K562 (cell line): ENCODE measurements at regions of chr7 and their contacts with region 1.

Region 1: GRCh38 chr7:107879400-107880035 is 11.5 kb upstream of the DLD start:
- DNase-seq: peak; percentile 57 to 78 (median 66)
- ATAC-seq: peak; percentile 88
- H3K4me3 ChIP-seq: no peak overlapping the region
- H3K27ac ChIP-seq: no peak overlapping the region
- H3K4me1 ChIP-seq: peaks cover 0 to 2% of the 10 kb centered on the region in 2 experiments; a peak in 1 of 5 replicates
- H3K27me3 ChIP-seq: peaks cover 2 to 13% of the 10 kb centered on the region in 2 experiments; a peak in 3 of 5 replicates
- CTCF ChIP-seq: peak; percentile 77 to 95 (median 89)
- EP300 ChIP-seq: peak; percentile 41; the same call in 1 of the 2 replicates
- POLR2A ChIP-seq: no peak
- RAD21 ChIP-seq: peak; percentile 94 to 95

Region 2: GRCh38 chr7:107201795-107202450 is 677.6 kb before region 1 on chr7:
- CTCF ChIA-PET with region 1: interaction called, 6 read pairs
- POLR2A ChIA-PET with region 1: no interaction called
- in situ Hi-C with region 1: no loop called
- intact Hi-C with region 1: loop called (anchors 5 kb)
- DNase-seq: peak; percentile 59 to 68 (median 64)
- ATAC-seq: peak; percentile 90
- H3K4me3 ChIP-seq: no peak overlapping the region
- H3K27ac ChIP-seq: no peak overlapping the region
- H3K4me1 ChIP-seq: peaks cover 0 to 5% of the 10 kb centered on the region in 2 experiments; a peak in 1 of 5 replicates
- H3K27me3 ChIP-seq: no peaks in the 10 kb centered on the region
- CTCF ChIP-seq: peak; percentile 77 to 84 (median 80)
- EP300 ChIP-seq: no peak
- POLR2A ChIP-seq: no peak
- RAD21 ChIP-seq: peak; percentile 73 to 80

Region 3: DNA sequence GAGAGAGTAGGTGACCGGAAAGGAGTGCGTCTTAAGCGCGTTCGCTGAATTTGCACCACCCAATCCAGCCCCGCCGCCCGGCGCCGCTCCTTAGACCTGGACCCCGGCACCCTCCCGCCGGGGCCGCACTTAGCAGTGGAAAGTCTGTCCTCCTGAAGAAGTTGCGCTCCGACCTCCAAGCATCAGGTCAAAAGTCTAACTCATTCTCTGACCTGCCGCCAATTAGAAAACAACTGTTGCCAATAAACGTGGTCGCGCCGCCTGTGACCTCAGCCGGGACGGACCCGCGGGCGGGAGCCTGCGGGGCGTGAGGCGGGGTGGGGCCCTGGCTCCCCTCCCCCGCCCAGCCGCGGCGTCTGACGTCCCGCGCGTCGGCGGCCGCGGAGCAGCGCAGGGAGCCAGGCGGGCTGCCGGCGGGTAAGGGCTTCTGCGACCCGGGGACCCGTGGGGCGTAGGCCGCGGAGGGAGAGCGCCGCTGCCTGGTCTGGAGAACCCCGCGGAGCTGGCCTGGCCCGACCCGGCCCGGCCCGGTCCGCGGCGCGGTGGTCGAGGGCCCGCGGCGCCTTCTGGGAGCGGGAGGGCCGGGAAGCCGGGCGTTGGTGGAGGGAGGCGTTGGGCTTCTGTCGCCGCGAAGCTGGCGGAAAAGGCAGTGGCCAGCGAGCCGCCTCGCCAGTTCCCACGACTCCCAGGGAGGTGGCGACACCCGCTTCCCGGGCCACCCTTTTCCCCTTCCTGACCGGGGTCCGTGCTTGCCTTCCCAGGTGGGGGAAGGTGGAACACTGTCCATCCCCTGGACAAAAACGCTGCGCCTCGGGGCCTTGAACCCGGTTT is 299.4 kb before region 1 on chr7 and contains the start of gene BCAP29:
- CTCF ChIA-PET with region 1: no interaction called
- POLR2A ChIA-PET with region 1: no interaction called
- in situ Hi-C with region 1: no loop called
- intact Hi-C with region 1: loop called (anchors 1 kb)
- DNase-seq: peak; percentile 94 to 95 (median 95)
- ATAC-seq: peak; percentile 94
- H3K4me3 ChIP-seq: peak within 1 kb of the TSS; percentile 62
- H3K27ac ChIP-seq: peak within 1 kb of the TSS; percentile 83
- H3K4me1 ChIP-seq: peaks cover 6 to 13% of the 10 kb centered on the region in 2 experiments; a peak in 4 of 5 replicates
- H3K27me3 ChIP-seq: no peaks in the 10 kb centered on the region
- CTCF ChIP-seq: peak; percentile 55 to 64 (median 60)
- EP300 ChIP-seq: peak; percentile 43
- POLR2A ChIP-seq: peak; percentile 92
- RAD21 ChIP-seq: peak; percentile 63 to 65
- polyA plus RNA-seq, gene BCAP29: 63.4 to 64.4 TPM

Region 4: GRCh38 chr7:107743567-107744344 is 135.8 kb before region 1 on chr7 and contains the start of gene CBLL1:
- CTCF ChIA-PET with region 1: interaction called, 14 read pairs
- POLR2A ChIA-PET with region 1: interaction called, 9 read pairs
- in situ Hi-C with region 1: loop called (anchors 10 kb)
- intact Hi-C with region 1: loop called (anchors 1 kb)
- DNase-seq: peak; percentile 95 to 99 (median 96)
- ATAC-seq: peak; percentile 97
- H3K4me3 ChIP-seq: peak within 1 kb of the TSS; percentile 93
- H3K27ac ChIP-seq: peak within 1 kb of the TSS; percentile 100
- H3K4me1 ChIP-seq: peaks cover 3 to 21% of the 10 kb centered on the region in 2 experiments
- H3K27me3 ChIP-seq: no peaks in the 10 kb centered on the region
- CTCF ChIP-seq: peak; percentile 96 to 98 (median 97)
- EP300 ChIP-seq: peak; percentile 78; the same call in 1 of the 2 replicates
- POLR2A ChIP-seq: peak; percentile 99
- RAD21 ChIP-seq: peak; percentile 81 to 96
- polyA plus RNA-seq, gene CBLL1: 17.4 to 35.4 TPM

Region 5: GRCh38 chr7:107890962-107891635 is 11.6 kb after region 1 on chr7 and contains the start of gene DLD:
- CTCF ChIA-PET with region 1: no interaction called
- POLR2A ChIA-PET with region 1: interaction called, 10 read pairs
- in situ Hi-C with region 1: no loop called
- intact Hi-C with region 1: no loop called
- DNase-seq: peak; percentile 98 to 99 (median 98)
- ATAC-seq: peak; percentile 96
- H3K4me3 ChIP-seq: peak within 1 kb of the TSS; percentile 55
- H3K27ac ChIP-seq: peak within 1 kb of the TSS; percentile 93
- H3K4me1 ChIP-seq: peaks cover 12 to 27% of the 10 kb centered on the region in 2 experiments; a peak in 4 of 5 replicates
- H3K27me3 ChIP-seq: no peaks in the 10 kb centered on the region; a peak in 1 of 5 replicates
- CTCF ChIP-seq: 0 out of 6 replicates have a peak, but pooled peaks of 1 of the 3 experiments have one; percentile 6
- EP300 ChIP-seq: 0 out of 2 replicates have a peak, but pooled peaks have one; percentile 17
- POLR2A ChIP-seq: peak; percentile 99
- RAD21 ChIP-seq: no peak
- polyA plus RNA-seq, gene DLD: 406 to 588 TPM